Sciatic nerve (tissue), 2 donors: ENCODE measurements at regions of chr1 and their contacts with region 1.

Region 1: DNA sequence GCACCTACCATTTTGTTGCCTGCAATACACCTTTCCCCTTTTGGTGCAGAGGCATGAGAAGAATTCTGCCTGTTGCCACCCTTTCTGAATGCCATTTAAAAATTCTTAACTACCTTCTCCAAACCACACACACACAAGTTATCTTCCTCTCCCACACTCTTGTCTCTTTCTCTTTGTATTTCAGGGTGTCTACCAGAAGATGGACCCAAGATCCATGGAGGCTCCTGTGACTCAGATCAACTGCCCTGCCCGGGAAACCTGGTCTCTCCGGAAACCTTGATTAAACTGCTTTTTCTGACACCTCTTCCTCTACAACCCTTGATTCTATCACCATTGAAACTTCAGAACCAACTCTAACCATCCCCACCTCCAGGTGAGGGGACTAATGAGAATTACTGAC is 2.4 kb upstream of the TARS2 start:
- DNase-seq: peak; percentile 9
- ATAC-seq: no peak

Region 2: DNA sequence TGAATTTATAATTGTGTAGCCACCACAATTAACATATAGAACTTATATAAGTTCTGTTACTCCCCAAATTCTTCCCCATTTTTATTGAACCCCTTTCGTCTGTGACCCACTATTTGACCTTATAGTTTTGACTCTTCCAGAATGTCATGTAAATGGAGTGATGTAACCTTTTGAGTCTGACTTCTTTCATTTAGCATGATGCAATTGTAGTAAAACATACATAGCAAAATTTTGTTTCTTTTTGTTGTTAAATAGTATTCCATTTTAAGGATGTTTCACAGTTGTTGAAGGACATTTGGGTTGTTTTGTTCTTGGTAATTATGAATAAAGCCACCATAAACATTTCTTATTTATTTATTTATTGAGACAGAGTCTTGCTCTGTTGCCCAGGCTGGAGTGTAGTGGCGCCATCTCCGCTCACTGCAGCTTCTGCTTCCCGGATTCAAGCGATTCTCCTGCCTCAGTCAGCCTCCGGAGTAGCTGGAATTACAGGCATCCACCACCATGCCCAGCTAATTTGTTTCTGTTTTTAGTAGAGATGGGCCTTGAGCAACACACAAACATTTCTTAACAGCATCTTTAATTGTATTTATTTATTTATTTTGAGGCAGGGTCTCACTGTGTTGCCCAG is 87.3 kb before region 1 on chr1:
- intact Hi-C with region 1: no loop called
- DNase-seq: no peak
- ATAC-seq: no peak

Region 3: GRCh38 chr1:150530491-150531159 is 45.8 kb after region 1 on chr1:
- intact Hi-C with region 1: loop called (anchors 2 kb)
- DNase-seq: no peak
- ATAC-seq: no peak